Transverse colon (tissue), 4 donors: ENCODE measurements at regions of chr11 and their contacts with region 1.

Region 1: DNA sequence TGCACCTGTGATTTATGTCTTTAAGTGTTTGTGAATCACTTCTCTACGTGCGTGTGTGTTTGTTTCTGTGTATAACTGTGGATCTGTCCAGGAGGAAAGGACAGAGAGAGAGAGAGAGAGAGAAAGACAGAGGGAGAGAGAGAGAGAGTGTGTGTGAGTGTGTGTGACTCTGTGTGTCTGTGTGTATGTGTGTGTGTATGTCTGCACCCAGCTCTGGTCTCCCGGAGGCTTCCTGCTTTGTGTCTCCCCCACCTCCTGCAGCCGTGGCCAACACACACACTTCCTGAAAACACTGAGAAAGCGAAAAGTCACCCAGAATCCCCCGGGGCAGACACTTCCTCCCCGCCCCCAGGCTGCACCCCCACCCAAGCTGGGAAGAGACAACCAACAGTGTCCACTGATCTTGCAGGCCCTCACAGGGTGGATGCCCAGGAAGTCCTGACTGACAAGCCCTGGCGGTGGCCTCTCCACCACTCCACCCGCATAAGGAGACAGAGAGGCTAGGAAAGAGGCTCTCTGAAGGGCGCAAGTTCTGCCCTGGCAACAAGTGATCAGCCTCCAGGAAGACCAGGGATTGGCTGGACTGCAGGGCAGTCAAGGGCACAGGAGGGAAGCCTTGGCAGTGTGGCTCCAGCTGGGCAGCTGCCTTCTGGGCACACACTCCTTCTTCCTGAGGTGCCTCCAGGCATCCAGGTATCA is 30.0 kb downstream of the ARAP1 start:
- DNase-seq: peak; percentile 91
- H3K4me3 ChIP-seq: peak overlapping the region; percentile 45 to 81 (median 57)
- H3K27ac ChIP-seq: peak overlapping the region; percentile 86 to 93 (median 92)
- H3K4me1 ChIP-seq: peaks cover 25 to 54% (median 39%) of the 10 kb centered on the region in 4 donors
- H3K27me3 ChIP-seq: no peaks in the 10 kb centered on the region
- CTCF ChIP-seq: peak in 1 of 5 experiments; percentile 17
- EP300 ChIP-seq: no peak
- POLR2A ChIP-seq: peak; percentile 82

Region 2: DNA sequence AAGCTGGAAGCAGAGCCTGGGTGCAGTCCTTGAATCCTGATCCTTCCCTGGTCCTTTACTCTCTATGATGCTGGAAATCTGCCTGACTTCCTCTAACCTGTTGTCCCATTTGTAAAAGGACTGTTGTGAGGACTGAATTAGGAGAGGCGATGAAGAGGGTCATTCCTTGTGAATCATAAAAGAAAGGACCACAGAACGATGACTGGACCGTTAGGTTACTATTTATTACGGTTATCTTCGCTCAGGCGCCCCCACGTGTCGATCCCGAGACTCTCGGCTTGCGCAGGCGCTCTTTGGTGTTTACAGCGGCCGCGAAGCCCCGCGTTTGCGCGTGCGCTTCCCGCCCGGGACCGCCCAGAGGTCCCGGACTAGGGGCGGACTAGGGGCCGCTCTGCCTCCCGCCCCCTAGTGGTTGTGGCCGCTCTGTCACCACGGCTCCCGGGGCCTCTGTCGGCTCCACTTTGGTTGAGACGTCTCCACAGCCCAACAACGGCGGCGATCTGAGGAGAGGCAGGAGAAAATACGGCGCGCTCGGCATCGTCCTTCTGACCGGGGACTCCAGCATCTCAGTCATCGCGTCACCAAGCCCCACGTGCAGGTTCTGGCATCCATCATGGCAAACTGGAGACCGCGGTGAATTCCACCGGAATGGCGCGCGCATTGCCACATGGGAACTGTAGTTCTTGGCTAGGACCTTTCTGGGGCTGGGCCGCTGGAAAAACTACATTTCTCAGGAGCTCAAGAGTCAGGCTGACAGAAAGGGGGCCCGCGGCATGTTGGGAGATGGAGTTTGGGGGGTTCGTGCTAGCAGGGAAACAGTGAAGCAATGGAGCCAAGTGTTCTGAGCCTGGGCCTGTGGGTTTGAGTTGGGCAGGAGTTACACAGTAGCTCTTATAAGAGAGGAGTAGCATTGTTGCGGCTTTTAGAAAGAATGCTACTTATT is 71.5 kb after region 1 on chr11 and contains the start of gene STARD10:
- in situ Hi-C with region 1: loop called (anchors 5 to 10 kb)
- intact Hi-C with region 1: loop called (anchors 5 kb)
- DNase-seq: peak; percentile 96
- H3K4me3 ChIP-seq: peak within 1 kb of the TSS; percentile 55 to 74 (median 58)
- H3K27ac ChIP-seq: peak within 1 kb of the TSS; percentile 87 to 95 (median 93)
- H3K4me1 ChIP-seq: peaks cover 4 to 22% (median 13%) of the 10 kb centered on the region in 4 donors
- H3K27me3 ChIP-seq: no peaks in the 10 kb centered on the region
- CTCF ChIP-seq: peak; percentile 96 to 100 (median 98)
- EP300 ChIP-seq: no peak
- POLR2A ChIP-seq: peak; percentile 37
- total RNA-seq, gene STARD10: 82.7 to 714 (median 225) TPM

Region 3: DNA sequence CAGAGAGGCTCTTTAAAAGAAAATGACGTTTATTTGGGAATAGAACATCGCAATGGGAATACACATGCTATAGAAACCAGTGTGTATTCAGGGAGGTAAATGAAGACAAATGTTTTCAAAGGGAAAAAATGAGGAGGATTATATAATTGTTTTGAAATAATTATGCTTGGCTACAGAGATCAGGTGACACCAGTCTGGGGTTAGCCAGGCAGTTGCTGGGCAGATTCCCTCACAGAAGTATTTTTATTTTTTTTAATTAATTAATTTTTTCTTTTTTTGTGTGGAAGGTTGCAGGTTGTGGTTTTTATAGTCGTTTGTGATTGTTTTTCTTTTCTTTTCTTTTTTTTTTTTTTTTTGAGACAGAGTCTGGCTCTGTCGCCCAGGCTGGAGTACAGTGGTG is 77.2 kb after region 1 on chr11:
- in situ Hi-C with region 1: loop called (anchors 5 to 10 kb)
- intact Hi-C with region 1: loop called (anchors 5 kb)
- DNase-seq: no peak
- H3K4me3 ChIP-seq: no peak overlapping the region
- H3K27ac ChIP-seq: no peak overlapping the region
- H3K4me1 ChIP-seq: peaks cover 0 to 4% (median under 1%) of the 10 kb centered on the region in 4 donors
- H3K27me3 ChIP-seq: no peaks in the 10 kb centered on the region
- CTCF ChIP-seq: no peak
- EP300 ChIP-seq: no peak
- POLR2A ChIP-seq: no peak

Region 4: DNA sequence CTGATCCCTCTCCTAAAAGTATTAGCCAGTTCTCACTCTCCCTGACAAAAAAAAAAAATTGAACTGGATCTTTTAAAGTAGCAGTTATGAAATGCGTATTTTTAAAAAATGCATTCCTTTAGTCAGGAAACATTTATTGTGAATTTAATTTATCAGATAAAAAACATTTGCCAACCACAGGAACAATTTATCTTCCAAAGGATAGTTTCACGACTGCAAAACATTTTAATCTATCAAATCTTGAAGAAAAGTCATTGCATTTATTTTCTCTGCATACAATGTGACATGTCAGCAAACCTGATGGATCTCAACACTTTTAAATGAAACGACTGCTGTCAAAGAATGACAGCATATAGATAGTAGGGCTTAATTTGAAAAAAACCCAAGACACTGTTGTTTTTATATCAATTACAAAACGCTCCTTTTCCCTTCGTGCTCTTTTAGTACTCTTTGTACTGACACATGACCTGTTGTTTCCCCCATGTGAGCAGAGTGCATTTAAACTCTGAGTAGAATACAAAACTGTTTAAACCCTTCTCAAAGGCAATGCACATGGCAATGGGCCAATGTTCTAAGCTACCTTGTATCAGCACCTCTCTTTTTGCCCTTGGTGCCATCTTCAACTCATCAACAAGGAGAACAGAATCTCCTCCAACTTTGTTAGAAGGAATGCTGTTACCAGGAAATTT is 199.0 kb after region 1 on chr11:
- in situ Hi-C with region 1: no loop called
- intact Hi-C with region 1: no loop called
- DNase-seq: no peak
- H3K4me3 ChIP-seq: no peak overlapping the region
- H3K27ac ChIP-seq: no peak overlapping the region
- H3K4me1 ChIP-seq: peaks cover 0 to 5% (median 0%) of the 10 kb centered on the region in 4 donors
- H3K27me3 ChIP-seq: no peaks in the 10 kb centered on the region
- CTCF ChIP-seq: no peak
- EP300 ChIP-seq: no peak
- POLR2A ChIP-seq: no peak